CD8-positive, alpha-beta T cell (primary cell): ENCODE measurements at regions of chr9 and their contacts with region 1.

Region 1: DNA sequence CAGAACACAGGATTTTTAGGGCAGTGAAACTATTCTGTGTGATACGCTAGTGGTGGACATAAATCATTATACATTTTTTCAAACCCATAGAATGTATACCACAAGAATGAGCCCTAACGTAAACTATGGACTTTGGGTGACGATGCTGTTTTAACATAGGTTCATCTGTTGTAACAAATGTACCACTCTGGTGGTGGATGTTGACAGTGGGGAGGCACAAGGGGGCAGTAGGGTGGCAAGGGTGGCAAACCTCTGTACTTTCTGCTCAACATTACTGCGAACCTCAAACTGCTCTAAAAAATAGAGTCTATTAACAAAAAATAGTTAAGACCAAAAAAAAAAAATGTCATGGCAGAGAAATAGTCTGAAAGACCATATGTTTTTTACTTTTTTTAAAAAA is 9.1 kb upstream of the MVB12B start:
- DNase-seq: peak; percentile 30 to 78 (median 62)
- ATAC-seq: peak; percentile 92
- H3K4me3 ChIP-seq: no peak overlapping the region
- H3K4me3 Mint-ChIP-seq: no peak overlapping the region
- H3K27ac ChIP-seq: no peak overlapping the region
- H3K27ac Mint-ChIP-seq: no peak overlapping the region
- H3K4me1 ChIP-seq: peaks cover 3% of the 10 kb centered on the region
- H3K4me1 Mint-ChIP-seq: peaks cover 14% of the 10 kb centered on the region
- H3K27me3 ChIP-seq: no peaks in the 10 kb centered on the region
- H3K27me3 Mint-ChIP-seq: no peaks in the 10 kb centered on the region
- CTCF ChIP-seq: peak; percentile 71

Region 2: DNA sequence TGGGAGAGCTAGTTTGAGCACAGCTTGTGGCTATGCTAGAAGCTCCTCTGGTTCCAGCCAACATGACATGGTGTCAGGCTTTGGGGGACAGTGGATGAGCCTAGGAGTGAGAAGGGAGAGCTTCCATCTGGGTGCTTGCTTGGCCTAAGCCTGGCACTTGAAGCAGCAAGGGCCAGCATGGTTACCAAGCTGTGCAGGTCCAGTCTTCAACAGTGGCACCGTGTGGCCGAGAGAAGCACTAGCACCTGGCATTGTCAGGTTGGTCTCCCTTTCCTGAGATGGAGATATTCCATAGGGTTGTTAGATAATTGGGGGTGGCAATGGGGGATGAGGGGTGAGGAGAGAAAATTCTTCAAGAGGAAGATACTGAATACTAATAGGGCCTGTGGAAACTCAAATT is 308.5 kb before region 1 on chr9:
- CTCF ChIA-PET with region 1: no interaction called
- POLR2A ChIA-PET with region 1: no interaction called
- intact Hi-C with region 1: no loop called
- DNase-seq: no peak
- ATAC-seq: no peak
- H3K4me3 ChIP-seq: no peak overlapping the region
- H3K4me3 Mint-ChIP-seq: no peak overlapping the region
- H3K27ac ChIP-seq: no peak overlapping the region
- H3K27ac Mint-ChIP-seq: no peak overlapping the region
- H3K4me1 ChIP-seq: no peaks in the 10 kb centered on the region
- H3K4me1 Mint-ChIP-seq: no peaks in the 10 kb centered on the region
- H3K27me3 ChIP-seq: no peaks in the 10 kb centered on the region
- H3K27me3 Mint-ChIP-seq: peaks cover 7% of the 10 kb centered on the region
- CTCF ChIP-seq: no peak

Region 3: DNA sequence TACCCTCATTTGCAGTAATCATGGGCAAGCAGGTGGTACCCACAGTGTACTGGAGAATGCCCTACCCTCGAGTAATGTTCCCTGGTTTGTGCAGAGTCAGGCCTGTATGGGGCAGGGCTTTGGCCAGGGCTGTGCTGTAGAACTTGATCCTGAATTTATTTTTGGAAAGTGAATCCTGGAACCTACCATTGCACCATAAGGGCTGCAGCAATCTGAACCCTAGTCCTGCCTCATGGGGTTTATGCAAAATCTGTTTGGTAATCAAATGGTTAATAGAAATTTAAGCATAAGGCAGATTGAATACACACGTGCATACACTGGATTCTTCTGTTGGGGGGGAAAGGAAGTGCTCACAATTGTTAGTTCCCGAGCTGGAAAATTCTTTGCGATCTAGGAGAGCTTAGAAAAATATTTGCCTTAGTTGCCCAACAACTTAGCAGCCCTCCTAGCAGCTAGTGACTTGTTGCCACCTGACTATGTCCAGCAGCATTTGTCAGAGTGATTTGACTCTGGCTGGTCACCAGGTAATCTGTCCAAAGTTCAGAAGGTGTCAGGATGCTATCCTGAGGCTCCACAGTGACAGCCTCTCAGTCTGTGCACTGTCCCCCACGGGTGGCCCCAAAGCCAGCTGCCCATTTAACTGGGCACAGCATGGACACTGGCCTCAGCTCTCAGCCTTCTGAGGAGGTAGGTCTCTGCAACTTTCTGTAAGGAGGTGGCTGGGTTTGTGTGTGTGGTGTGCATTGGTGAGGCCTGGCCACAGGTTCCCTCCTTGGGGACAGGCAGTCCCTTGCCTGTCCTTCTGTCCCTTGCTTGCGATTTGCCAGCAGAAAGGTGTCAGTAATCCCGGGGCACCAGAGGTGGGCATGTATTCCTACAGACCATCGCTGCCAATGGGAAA is 17.5 kb after region 1 on chr9:
- CTCF ChIA-PET with region 1: interaction called, 10 read pairs
- POLR2A ChIA-PET with region 1: no interaction called
- intact Hi-C with region 1: no loop called
- DNase-seq: peak in 1 of 9 experiments; percentile 34
- ATAC-seq: no peak
- H3K4me3 ChIP-seq: no peak overlapping the region
- H3K4me3 Mint-ChIP-seq: no peak overlapping the region
- H3K27ac ChIP-seq: no peak overlapping the region
- H3K27ac Mint-ChIP-seq: no peak overlapping the region
- H3K4me1 ChIP-seq: peaks cover 23% of the 10 kb centered on the region
- H3K4me1 Mint-ChIP-seq: peaks cover 67% of the 10 kb centered on the region
- H3K27me3 ChIP-seq: no peaks in the 10 kb centered on the region
- H3K27me3 Mint-ChIP-seq: no peaks in the 10 kb centered on the region
- CTCF ChIP-seq: no peak

Region 4: DNA sequence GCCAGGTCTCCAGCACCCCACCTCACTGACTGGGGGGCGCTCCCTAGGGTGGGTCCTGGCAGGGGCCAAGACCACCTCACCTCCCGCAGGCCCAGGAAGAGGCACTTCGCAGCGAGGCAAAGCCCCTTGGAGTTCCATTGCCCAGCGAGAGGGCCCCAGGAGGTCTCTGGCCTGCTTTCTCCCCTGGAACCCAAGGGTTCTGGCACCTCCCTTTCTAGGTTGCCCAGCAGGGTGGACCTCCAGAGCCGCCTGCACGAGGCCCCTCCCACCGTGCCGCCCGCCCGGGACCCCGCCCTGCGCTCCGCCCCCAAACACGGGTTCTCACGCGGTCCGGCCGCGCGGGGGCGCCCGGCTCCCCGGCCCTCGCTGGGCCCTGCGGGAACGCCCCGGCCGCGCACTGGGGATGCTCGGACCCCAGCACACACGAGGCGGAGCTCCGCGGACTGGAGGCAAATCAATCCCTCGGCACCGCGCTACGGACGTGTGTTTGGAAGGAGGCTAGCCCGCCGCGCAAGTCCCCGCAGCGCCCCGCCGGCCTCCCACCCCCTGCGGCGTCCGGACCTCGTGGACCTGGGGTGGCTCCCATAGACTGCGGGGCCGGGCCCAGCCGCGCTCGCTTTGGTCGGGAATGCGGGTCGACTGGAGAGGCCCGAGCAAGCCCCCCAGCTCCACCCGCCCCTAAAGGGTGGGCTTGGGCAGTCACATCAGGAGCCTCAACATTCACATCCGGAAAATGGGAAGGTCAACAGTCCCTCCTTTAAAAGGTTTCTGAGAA is 196.7 kb after region 1 on chr9:
- CTCF ChIA-PET with region 1: no interaction called
- POLR2A ChIA-PET with region 1: no interaction called
- intact Hi-C with region 1: no loop called
- DNase-seq: peak; percentile 29 to 78 (median 58)
- ATAC-seq: peak; percentile 89
- H3K4me3 ChIP-seq: no peak overlapping the region
- H3K4me3 Mint-ChIP-seq: peak overlapping the region; percentile 8
- H3K27ac ChIP-seq: no peak overlapping the region
- H3K27ac Mint-ChIP-seq: no peak overlapping the region
- H3K4me1 ChIP-seq: peaks cover 17% of the 10 kb centered on the region
- H3K4me1 Mint-ChIP-seq: peaks cover 28% of the 10 kb centered on the region
- H3K27me3 ChIP-seq: peaks cover 9 to 15% of the 10 kb centered on the region in 2 experiments
- H3K27me3 Mint-ChIP-seq: peaks cover 56% of the 10 kb centered on the region
- CTCF ChIP-seq: peak; percentile 34